A673 (cell line): ENCODE measurements at regions of chr9 and their contacts with region 1.

Region 1: GRCh38 chr9:82299870-82300269 is 311.3 kb downstream of the SPATA31D1 start:
- DNase-seq: no peak
- H3K4me3 ChIP-seq: no peak overlapping the region
- H3K27ac ChIP-seq: no peak overlapping the region
- H3K4me1 ChIP-seq: no peaks in the 10 kb centered on the region
- H3K27me3 ChIP-seq: no peaks in the 10 kb centered on the region
- CTCF ChIP-seq: no peak

Region 2: GRCh38 chr9:82560457-82560904 is 260.6 kb after region 1 on chr9:
- CTCF ChIA-PET with region 1: no interaction called
- POLR2A ChIA-PET with region 1: no interaction called
- intact Hi-C with region 1: no loop called
- DNase-seq: no peak
- H3K4me3 ChIP-seq: no peak overlapping the region
- H3K27ac ChIP-seq: no peak overlapping the region
- H3K4me1 ChIP-seq: no peaks in the 10 kb centered on the region
- H3K27me3 ChIP-seq: no peaks in the 10 kb centered on the region
- CTCF ChIP-seq: no peak

Region 3: GRCh38 chr9:83509402-83509801 is 1209.5 kb after region 1 on chr9:
- CTCF ChIA-PET with region 1: no interaction called
- POLR2A ChIA-PET with region 1: interaction called, 15 read pairs
- intact Hi-C with region 1: no loop called
- DNase-seq: peak; percentile 14
- H3K4me3 ChIP-seq: no peak overlapping the region
- H3K27ac ChIP-seq: no peak overlapping the region
- H3K4me1 ChIP-seq: no peaks in the 10 kb centered on the region
- H3K27me3 ChIP-seq: no peaks in the 10 kb centered on the region
- CTCF ChIP-seq: no peak